ENCODE measurements at regions of chr3 and their contacts with region 1.

Region 1: GRCh38 chr3:197155046-197155445 is 125.4 kb upstream of the MELTF start:
- DNase-seq: no peak
- ATAC-seq: no peak
- H3K4me3 ChIP-seq: no peak overlapping the region
- H3K27ac ChIP-seq: no peak overlapping the region
- H3K4me1 ChIP-seq: peaks cover 9% of the 10 kb centered on the region
- H3K27me3 ChIP-seq: no peaks in the 10 kb centered on the region
- CTCF ChIP-seq: no peak

Region 2: GRCh38 chr3:196920733-196921132 is 234.3 kb before region 1 on chr3:
- intact Hi-C with region 1: no loop called
- DNase-seq: no peak
- ATAC-seq: no peak
- H3K4me3 ChIP-seq: no peak overlapping the region
- H3K27ac ChIP-seq: no peak overlapping the region
- H3K4me1 ChIP-seq: no peaks in the 10 kb centered on the region
- H3K27me3 ChIP-seq: no peaks in the 10 kb centered on the region
- CTCF ChIP-seq: no peak

Region 3: GRCh38 chr3:197083486-197083885 is 71.6 kb before region 1 on chr3:
- intact Hi-C with region 1: no loop called
- DNase-seq: peak; percentile 25 to 55
- ATAC-seq: peak; percentile 99 to 100 (median 99)
- H3K4me3 ChIP-seq: peak overlapping the region; percentile 7
- H3K27ac ChIP-seq: peak overlapping the region; percentile 75
- H3K4me1 ChIP-seq: peaks cover 19% of the 10 kb centered on the region
- H3K27me3 ChIP-seq: no peaks in the 10 kb centered on the region
- CTCF ChIP-seq: no peak

Region 4: DNA sequence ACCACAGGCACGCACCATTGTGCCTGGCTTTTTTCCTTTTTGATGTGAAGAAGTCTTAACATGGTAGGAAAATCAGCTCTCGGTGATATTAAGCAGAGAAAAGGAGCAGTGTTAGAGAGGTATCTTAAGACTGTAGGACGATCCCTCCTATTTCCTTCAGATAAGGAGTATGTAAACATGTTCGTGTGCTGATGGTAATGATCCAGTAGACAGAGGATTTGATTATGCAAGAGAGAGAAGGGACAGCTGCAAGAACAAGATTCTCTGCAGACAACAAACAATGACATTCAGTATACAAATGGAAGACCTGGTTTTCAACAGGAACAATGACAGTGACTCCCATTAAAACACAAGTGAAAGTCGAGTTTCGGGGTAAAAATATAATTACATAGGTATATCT is 30.3 kb before region 1 on chr3:
- intact Hi-C with region 1: loop called in 1 of 2 experiments (anchors 5 kb)
- DNase-seq: no peak
- ATAC-seq: no peak
- H3K4me3 ChIP-seq: no peak overlapping the region
- H3K27ac ChIP-seq: no peak overlapping the region
- H3K4me1 ChIP-seq: no peaks in the 10 kb centered on the region
- H3K27me3 ChIP-seq: no peaks in the 10 kb centered on the region
- CTCF ChIP-seq: no peak

Measured in psoas muscle (tissue), 8 donors.